ENCODE measurements at regions of chr12 and their contacts with region 1.

Region 1: DNA sequence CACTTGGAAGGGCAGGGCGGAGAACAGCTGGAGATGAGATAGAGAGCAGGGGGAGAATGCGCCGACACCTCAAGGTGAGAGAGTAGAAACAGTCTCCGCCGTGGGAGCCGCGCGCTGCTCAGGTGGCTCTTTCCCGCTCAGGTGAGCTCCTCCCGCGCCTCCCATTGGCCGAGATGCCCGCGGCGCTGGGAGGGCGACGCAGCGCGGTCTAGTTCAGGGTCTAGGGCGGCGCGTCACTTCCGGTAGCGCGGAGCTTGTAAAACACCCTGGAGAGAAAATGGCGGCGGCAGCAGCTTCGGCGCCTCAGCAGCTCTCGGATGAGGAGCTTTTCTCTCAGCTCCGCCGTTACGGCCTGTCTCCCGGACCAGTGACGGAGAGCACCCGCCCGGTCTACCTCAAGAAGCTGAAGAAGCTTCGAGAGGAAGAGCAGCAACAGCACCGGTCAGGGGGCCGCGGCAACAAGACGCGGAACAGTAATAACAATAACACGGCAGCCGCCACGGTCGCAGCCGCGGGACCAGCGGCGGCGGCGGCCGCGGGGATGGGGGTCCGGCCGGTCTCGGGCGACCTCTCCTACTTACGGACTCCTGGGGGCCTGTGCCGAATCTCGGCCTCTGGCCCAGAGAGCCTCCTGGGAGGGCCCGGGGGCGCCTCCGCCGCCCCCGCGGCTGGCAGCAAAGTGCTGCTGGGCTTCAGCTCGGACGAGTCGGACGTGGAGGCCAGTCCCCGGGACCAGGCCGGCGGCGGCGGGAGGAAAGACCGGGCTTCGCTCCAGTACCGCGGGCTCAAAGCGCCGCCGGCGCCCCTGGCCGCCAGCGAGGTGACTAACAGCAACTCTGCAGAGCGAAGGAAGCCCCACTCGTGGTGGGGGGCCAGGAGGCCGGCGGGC is at the start of gene LEMD3:
- DNase-seq: peak; percentile 90 to 97 (median 94)
- H3K4me3 ChIP-seq: peak within 1 kb of the TSS; percentile 35 to 100 (median 95)
- H3K27ac ChIP-seq: peak within 1 kb of the TSS; percentile 52 to 97 (median 91)
- H3K27me3 ChIP-seq: no peaks in the 10 kb centered on the region
- CTCF ChIP-seq: peak in 27 of 56 donors; percentile 4 to 49 (median 19)
- total RNA-seq, gene LEMD3: 28.3 to 49.9 (median 37.3) TPM

Region 2: GRCh38 chr12:65278576-65279368 is 109.2 kb after region 1 on chr12 and contains the start of gene MSRB3:
- intact Hi-C with region 1: loop called in 1 of 2 experiments (anchors 10 kb)
- DNase-seq: peak; percentile 35 to 83 (median 65)
- H3K4me3 ChIP-seq: peak within 1 kb of the TSS; percentile 61 to 93 (median 81)
- H3K27ac ChIP-seq: peak within 1 kb of the TSS in 54 of 59 donors; percentile 7 to 87 (median 74)
- H3K27me3 ChIP-seq: no peaks in the 10 kb centered on the region
- CTCF ChIP-seq: peak in 2 of 56 donors; percentile 3 to 9
- total RNA-seq, gene MSRB3: 9.5 to 45.8 (median 20.7) TPM

Region 3: GRCh38 chr12:65602610-65603295 is 433.2 kb after region 1 on chr12:
- intact Hi-C with region 1: no loop called
- DNase-seq: peak in 9 of 10 donors; percentile 13 to 68 (median 51)
- H3K4me3 ChIP-seq: peak overlapping the region in 23 of 59 donors; percentile 1 to 42 (median 20)
- H3K27ac ChIP-seq: no peak overlapping the region
- H3K27me3 ChIP-seq: peaks cover 0 to 49% (median 14%) of the 10 kb centered on the region in 45 donors
- CTCF ChIP-seq: peak; percentile 45 to 82 (median 69)